AG04449 (cell line): ENCODE measurements at regions of chr22 and their contacts with region 1.

Region 1: DNA sequence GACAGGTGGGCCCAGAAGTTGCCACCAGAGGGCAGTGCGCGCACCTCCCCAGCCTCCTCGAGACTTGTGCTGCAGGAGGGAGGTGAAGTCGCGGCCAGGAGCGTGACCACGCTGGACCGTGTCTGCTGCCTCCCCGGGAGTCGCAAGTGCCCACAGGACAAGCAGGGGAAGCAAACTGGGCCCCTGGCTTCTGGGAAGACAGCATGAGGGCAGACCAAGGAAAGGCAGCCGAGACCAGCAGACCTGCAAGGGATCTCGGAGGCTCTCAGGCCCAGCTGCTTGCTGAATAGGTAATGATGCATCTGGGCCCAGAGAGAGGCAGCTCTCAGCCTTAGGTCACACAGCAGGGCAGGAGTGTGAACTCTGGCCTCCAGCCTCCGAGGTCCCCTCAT is 17.0 kb upstream of the IL2RB start:
- DNase-seq: no peak
- H3K4me3 ChIP-seq: no peak overlapping the region
- CTCF ChIP-seq: peak; percentile 93

Region 2: DNA sequence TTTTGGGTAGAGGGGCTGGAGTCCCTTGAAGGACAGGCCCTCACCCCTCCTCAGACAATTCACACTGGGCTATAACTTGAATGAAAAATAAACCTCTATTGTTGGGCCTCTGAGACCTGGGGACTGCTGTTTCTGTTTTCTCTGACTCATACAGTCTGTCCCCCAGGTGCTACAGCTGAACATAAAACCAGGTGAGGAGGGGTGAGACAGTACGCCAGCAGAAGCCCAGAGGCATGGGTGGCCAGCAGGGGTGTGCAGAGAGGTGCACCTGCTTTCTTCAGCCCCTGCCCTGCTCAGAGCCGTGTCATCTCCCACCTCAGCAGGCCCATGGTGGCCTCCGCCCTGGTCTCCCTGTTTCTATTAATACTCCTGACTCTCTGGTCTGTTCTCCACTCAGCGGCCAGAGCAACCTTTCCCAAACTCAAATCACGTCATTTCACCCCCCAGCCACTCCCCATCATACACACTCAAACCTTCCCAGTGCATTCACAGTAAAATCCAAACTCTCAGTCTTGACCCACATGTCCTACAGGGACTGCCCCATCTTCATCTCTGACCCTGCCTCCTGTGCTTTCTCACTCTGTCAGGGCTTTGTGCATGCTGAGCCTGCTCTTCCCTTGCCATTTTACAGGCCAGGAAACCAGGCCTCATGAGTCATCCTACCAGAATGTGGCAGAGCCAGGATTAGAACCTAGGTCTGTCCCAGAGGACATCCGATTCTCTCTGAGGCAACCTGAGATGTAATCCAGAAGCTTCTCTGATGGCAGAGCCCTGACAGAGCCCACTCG is 11.6 kb before region 1 on chr22:
- CTCF ChIA-PET with region 1: interaction called, 21 read pairs
- POLR2A ChIA-PET with region 1: no interaction called
- DNase-seq: no peak
- H3K4me3 ChIP-seq: no peak overlapping the region
- CTCF ChIP-seq: no peak

Region 3: GRCh38 chr22:37186228-37186996 is 19.7 kb after region 1 on chr22:
- CTCF ChIA-PET with region 1: interaction called, 13 read pairs
- POLR2A ChIA-PET with region 1: no interaction called
- DNase-seq: no peak
- H3K4me3 ChIP-seq: no peak overlapping the region
- CTCF ChIP-seq: no peak